ENCODE measurements at regions of chr5 and their contacts with region 1.

Region 1: DNA sequence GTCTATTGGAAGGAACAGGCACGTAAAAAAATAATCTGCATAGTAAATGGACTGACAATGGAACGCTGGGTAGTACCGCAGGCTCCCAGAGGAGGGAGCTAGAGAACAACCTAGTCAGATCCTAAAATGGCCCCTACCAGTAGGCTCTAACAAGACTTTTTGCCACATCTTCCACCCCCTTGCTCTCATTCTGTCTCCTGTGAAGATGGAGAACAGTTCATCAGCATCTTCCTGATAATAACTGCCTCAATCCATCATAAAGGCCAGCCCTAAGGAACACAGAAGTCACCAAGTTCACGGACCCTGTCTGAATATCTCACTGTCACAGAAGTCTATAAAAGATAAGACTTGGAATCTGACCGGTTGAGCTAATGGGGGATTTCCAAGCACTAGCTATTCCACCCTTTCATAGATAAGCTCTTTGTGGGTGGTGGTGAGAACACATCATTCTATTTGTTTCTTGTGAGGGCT is 133.4 kb downstream of the SLC1A3 start:
- DNase-seq: peak; percentile 90
- ATAC-seq: peak; percentile 57
- H3K4me3 Mint-ChIP-seq: no peak overlapping the region
- H3K27ac Mint-ChIP-seq: no peak overlapping the region
- H3K4me1 Mint-ChIP-seq: peaks cover 22% of the 10 kb centered on the region
- H3K27me3 Mint-ChIP-seq: no peaks in the 10 kb centered on the region
- CTCF ChIP-seq: peak; percentile 87

Region 2: DNA sequence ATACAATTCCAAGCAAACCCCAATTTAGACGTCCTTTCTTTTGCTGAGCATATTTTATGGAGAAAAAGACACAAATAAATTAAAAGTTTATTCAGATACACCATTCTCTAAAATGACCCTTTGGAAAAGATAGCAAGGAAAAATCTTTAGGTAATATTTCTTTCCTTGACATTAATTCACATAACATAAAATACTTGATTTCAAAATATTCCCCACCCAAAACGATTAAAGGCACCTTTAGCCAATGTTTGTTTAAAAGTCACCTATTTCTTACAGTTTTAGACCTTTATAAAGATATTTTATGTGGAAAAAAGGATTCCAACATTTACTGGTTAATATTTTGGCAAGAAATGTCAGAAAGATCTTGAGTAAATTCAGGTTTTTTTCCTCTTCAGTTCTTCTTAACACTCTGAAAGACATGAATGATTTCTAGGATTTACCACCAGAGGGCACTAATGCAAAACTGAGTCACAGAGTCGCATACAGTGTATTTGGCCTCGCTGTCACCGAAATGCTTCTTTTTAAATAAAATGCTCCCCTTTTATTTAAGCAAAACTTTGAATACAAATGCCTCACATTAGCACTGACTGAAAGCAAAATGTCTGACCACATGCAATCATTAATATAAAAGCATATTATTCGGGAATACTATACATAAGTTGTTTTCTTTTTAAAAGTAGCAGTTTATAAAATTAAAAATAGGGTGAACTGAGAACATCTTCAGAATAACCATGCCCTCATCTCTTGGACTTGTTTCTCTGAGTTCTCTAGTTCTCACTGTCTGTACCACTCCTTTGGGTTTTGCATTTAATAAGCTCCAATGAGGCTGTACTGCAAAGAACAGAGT is 10.9 kb before region 1 on chr5:
- CTCF ChIA-PET with region 1: interaction called, 18 read pairs
- POLR2A ChIA-PET with region 1: no interaction called
- DNase-seq: no peak
- ATAC-seq: peak; percentile 31; the same call in 1 of the 2 replicates
- H3K4me3 Mint-ChIP-seq: no peak overlapping the region
- H3K27ac Mint-ChIP-seq: no peak overlapping the region
- H3K4me1 Mint-ChIP-seq: peaks cover 13% of the 10 kb centered on the region
- H3K27me3 Mint-ChIP-seq: no peaks in the 10 kb centered on the region
- CTCF ChIP-seq: peak; percentile 34

Region 3: GRCh38 chr5:36870399-36871040 is 130.7 kb after region 1 on chr5:
- CTCF ChIA-PET with region 1: interaction called, 23 read pairs
- POLR2A ChIA-PET with region 1: interaction called, 4 read pairs
- DNase-seq: no peak
- ATAC-seq: peak; percentile 82
- H3K4me3 Mint-ChIP-seq: no peak overlapping the region
- H3K27ac Mint-ChIP-seq: no peak overlapping the region
- H3K4me1 Mint-ChIP-seq: peaks cover 14% of the 10 kb centered on the region
- H3K27me3 Mint-ChIP-seq: no peaks in the 10 kb centered on the region
- CTCF ChIP-seq: peak; percentile 54

Region 4: GRCh38 chr5:36875790-36876388 is 136.1 kb after region 1 on chr5:
- CTCF ChIA-PET with region 1: interaction called, 23 read pairs
- POLR2A ChIA-PET with region 1: interaction called, 5 read pairs
- DNase-seq: peak; percentile 67
- ATAC-seq: peak; percentile 34
- H3K4me3 Mint-ChIP-seq: peak overlapping the region; percentile 94
- H3K27ac Mint-ChIP-seq: peak overlapping the region; percentile 95
- H3K4me1 Mint-ChIP-seq: peaks cover 23% of the 10 kb centered on the region
- H3K27me3 Mint-ChIP-seq: no peaks in the 10 kb centered on the region
- CTCF ChIP-seq: no peak

Region 5: GRCh38 chr5:37005946-37006540 is 266.3 kb after region 1 on chr5:
- CTCF ChIA-PET with region 1: interaction called, 14 read pairs
- POLR2A ChIA-PET with region 1: no interaction called
- DNase-seq: no peak
- ATAC-seq: no peak
- H3K4me3 Mint-ChIP-seq: no peak overlapping the region
- H3K27ac Mint-ChIP-seq: no peak overlapping the region
- H3K4me1 Mint-ChIP-seq: no peaks in the 10 kb centered on the region
- H3K27me3 Mint-ChIP-seq: no peaks in the 10 kb centered on the region
- CTCF ChIP-seq: no peak